H1 (cell line): ENCODE measurements at regions of chr2 and their contacts with region 1.

Region 1: GRCh38 chr2:177263451-177264208 is 897 bp downstream of the NFE2L2 start:
- DNase-seq: peak; percentile 44 to 88
- H3K4me3 ChIP-seq: peak overlapping the region; percentile 71 to 82 (median 78)
- H3K27ac ChIP-seq: peak overlapping the region; percentile 78; the same call in 1 of the 2 replicates
- H3K4me1 ChIP-seq: peaks cover 0 to 2% (median 2%) of the 10 kb centered on the region in 4 experiments; a peak in 3 of 7 replicates
- H3K27me3 ChIP-seq: no peaks in the 10 kb centered on the region
- CTCF ChIP-seq: peak; percentile 47 to 57 (median 50); a peak in 3 of 4 replicates
- EP300 ChIP-seq: no peak; a peak in 1 of 3 replicates
- POLR2A ChIP-seq: peak; percentile 34 to 73
- RAD21 ChIP-seq: peak; percentile 31 to 55

Region 2: DNA sequence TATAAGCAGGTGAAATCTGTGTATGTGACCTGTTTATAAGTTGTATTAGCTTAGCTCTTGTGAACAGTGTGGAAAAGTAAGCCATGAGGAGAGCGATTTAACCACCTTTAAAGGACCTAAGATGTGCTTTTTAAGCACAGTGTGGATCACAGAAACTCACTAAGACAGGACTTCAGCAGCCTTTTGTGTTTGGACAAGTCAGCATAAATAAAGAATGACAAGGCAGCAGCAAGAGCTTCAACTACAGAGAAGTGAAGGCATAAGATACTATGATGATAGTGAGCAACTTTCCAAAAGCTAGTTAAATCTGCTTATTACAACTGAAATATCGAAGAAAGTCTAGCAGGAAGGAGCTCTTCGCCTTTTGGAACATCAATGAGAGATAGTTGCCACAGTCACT is 42.1 kb before region 1 on chr2:
- CTCF ChIA-PET with region 1: no interaction called
- POLR2A ChIA-PET with region 1: interaction called, 55 read pairs
- DNase-seq: no peak
- H3K4me3 ChIP-seq: no peak overlapping the region
- H3K27ac ChIP-seq: no peak overlapping the region
- H3K4me1 ChIP-seq: no peaks in the 10 kb centered on the region
- H3K27me3 ChIP-seq: no peaks in the 10 kb centered on the region
- CTCF ChIP-seq: no peak
- EP300 ChIP-seq: no peak
- POLR2A ChIP-seq: peak; percentile 22 to 42; a peak in 2 of 3 replicates
- RAD21 ChIP-seq: no peak

Region 3: DNA sequence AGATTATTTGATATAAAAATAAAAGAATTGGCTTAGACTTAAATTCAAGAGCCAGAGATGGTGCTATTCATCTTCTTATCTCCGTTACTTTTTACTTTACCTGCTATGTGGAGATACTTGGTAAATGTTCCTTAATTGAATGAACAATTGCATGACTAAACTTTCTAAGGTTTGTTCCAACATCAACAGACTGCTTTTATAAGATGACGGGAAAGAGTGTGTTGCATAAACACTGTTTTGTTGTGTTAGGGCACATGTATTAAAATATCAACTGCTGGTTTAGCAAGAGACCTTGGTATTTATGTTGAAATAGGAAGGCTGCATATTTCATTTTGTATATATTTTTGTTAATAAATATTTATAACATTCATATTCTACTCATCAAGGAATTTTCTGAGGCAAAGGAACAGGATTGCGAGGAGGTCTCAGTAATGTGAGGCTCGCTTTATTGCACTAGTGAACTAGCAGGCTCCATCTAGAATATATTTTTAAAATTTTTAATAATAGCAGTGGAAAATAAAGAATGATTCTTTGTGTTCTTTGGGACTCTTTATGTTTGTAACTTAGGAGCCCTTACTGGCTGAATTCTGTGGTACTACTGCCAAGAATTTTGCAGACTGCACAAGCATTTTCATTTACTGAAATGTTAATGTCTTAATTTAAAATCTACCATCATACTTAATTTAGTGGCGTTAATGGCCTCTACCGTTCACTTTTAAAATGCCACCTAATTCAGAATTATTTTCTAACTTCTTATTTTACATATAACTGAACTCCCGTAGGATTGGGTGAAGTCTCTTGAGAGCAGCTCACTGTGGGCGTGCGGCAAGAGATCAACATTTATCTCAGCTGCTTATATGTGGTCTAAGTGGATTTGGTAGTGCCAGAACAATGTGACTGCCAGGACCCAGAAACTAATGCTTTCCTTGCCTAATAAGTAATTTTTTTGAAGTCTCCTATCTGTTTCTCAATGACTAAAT is 11.7 kb after region 1 on chr2:
- CTCF ChIA-PET with region 1: interaction called, 4 read pairs
- POLR2A ChIA-PET with region 1: interaction called, 33 read pairs
- DNase-seq: no peak
- H3K4me3 ChIP-seq: no peak overlapping the region
- H3K27ac ChIP-seq: no peak overlapping the region
- H3K4me1 ChIP-seq: no peaks in the 10 kb centered on the region
- H3K27me3 ChIP-seq: no peaks in the 10 kb centered on the region
- CTCF ChIP-seq: no peak
- EP300 ChIP-seq: no peak
- POLR2A ChIP-seq: no peak
- RAD21 ChIP-seq: no peak

Region 4: GRCh38 chr2:177314194-177314593 is 50.6 kb after region 1 on chr2:
- CTCF ChIA-PET with region 1: interaction called, 12 read pairs
- POLR2A ChIA-PET with region 1: interaction called, 16 read pairs
- DNase-seq: no peak
- H3K4me3 ChIP-seq: no peak overlapping the region
- H3K27ac ChIP-seq: no peak overlapping the region
- H3K4me1 ChIP-seq: peaks cover 0 to 5% (median 2%) of the 10 kb centered on the region in 4 experiments; a peak in 3 of 7 replicates
- H3K27me3 ChIP-seq: no peaks in the 10 kb centered on the region
- CTCF ChIP-seq: no peak
- EP300 ChIP-seq: no peak
- POLR2A ChIP-seq: no peak
- RAD21 ChIP-seq: no peak